ENCODE measurements at regions of chr11 and their contacts with region 1.

Region 1: DNA sequence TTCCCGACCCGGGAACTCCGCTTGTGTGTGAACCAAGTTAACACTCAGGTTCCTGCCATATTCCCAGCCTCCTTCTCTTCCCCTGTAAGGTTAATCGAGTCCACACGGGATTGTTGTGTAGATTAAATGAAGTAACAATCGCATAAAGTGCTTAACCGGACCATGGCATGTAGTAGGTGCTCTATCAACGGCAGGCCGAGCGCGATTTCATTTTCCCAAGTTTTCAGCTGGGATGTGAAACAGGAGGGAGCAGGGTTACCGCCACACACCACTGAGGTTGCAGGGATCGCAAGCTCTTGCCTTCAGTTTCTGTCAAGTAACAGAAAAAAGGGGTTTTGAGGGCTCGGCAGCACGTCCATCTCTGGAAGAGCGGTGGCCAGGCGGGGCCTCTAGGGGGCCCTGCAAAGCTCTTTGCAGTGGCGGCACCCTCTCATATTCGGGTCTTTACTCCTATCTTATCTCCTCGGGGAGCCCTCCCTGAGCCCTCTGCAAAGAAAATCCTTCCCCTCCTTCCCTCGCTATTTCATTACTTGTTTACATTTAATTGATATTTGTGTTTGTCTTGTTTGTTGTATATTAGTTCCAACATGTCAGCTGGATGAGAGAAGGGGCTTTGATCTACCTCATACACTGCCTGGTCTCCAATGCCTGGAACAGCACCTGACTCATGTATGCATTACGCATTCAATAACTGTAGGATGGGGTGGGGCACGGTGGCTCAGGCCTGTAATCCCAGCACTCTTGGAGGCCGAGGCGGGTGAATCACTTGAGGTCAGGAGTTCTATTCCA is 818 bp upstream of the PLEKHA7 start:
- DNase-seq: no peak
- H3K4me3 ChIP-seq: peak overlapping the region; percentile 76 to 88 (median 81)
- H3K27ac ChIP-seq: peak overlapping the region in 1 of 4 donors; percentile 46
- H3K4me1 ChIP-seq: peaks cover 0 to 25% (median 22%) of the 10 kb centered on the region in 4 donors
- H3K27me3 ChIP-seq: peaks cover 0 to 18% (median 2%) of the 10 kb centered on the region in 4 donors
- CTCF ChIP-seq: peak in 1 of 3 experiments; percentile 42
- EP300 ChIP-seq: no peak
- POLR2A ChIP-seq: no peak

Region 2: GRCh38 chr11:16945671-16946469 is 69.2 kb before region 1 on chr11:
- intact Hi-C with region 1: loop called (anchors 5 kb)
- DNase-seq: no peak
- H3K4me3 ChIP-seq: no peak overlapping the region
- H3K27ac ChIP-seq: no peak overlapping the region
- H3K4me1 ChIP-seq: peaks cover 0 to 3% (median 0%) of the 10 kb centered on the region in 4 donors
- H3K27me3 ChIP-seq: no peaks in the 10 kb centered on the region
- CTCF ChIP-seq: peak in 2 of 3 experiments; percentile 28 to 55
- EP300 ChIP-seq: no peak
- POLR2A ChIP-seq: no peak

Region 3: GRCh38 chr11:16958833-16959232 is 56.2 kb before region 1 on chr11:
- intact Hi-C with region 1: no loop called
- DNase-seq: no peak
- H3K4me3 ChIP-seq: no peak overlapping the region
- H3K27ac ChIP-seq: no peak overlapping the region
- H3K4me1 ChIP-seq: no peaks in the 10 kb centered on the region
- H3K27me3 ChIP-seq: no peaks in the 10 kb centered on the region
- CTCF ChIP-seq: no peak
- EP300 ChIP-seq: no peak
- POLR2A ChIP-seq: no peak

Region 4: GRCh38 chr11:17077520-17078401 is 62.7 kb after region 1 on chr11 and contains the start of gene RPS13:
- intact Hi-C with region 1: no loop called
- DNase-seq: peak; percentile 99
- H3K4me3 ChIP-seq: peak within 1 kb of the TSS; percentile 66 to 78 (median 74)
- H3K27ac ChIP-seq: peak within 1 kb of the TSS; percentile 89 to 93 (median 90)
- H3K4me1 ChIP-seq: peaks cover 29 to 37% (median 32%) of the 10 kb centered on the region in 4 donors
- H3K27me3 ChIP-seq: no peaks in the 10 kb centered on the region
- CTCF ChIP-seq: no peak
- EP300 ChIP-seq: no peak
- POLR2A ChIP-seq: peak; percentile 65
- total RNA-seq, gene RPS13: 828 to 2,253 (median 1,546) TPM

Measured in esophagus muscularis mucosa (tissue), 4 donors.